ENCODE measurements at regions of chr9 and their contacts with region 1.

Region 1: DNA sequence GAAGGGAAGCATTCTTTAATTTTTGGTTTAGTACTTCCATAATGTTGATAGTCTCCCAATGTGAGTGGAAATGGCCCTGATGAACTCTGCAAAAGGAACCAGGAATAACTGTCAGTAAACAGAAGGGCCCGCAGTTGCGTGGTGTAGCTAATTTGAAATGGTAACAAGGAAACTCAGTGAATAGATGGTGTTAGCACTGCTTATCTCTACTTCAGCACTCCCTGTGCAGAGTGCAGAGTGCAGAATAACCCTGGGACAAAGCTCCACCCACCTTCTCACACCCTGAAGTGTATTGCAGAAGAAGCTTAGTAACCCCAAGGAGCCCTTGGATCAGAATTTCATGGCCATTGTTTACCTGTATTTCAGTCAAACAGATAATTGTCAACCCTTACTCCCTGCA is 158.9 kb downstream of the PCSK5 start:
- DNase-seq: no peak

Region 2: GRCh38 chr9:75775166-75775565 is 274.2 kb before region 1 on chr9:
- intact Hi-C with region 1: no loop called
- DNase-seq: no peak

Region 3: GRCh38 chr9:75788006-75788634 is 261.2 kb before region 1 on chr9:
- intact Hi-C with region 1: loop called in 1 of 2 experiments (anchors 5 kb)
- DNase-seq: no peak